Sciatic nerve (tissue), 2 donors: ENCODE measurements at regions of chr5 and their contacts with region 1.

Region 1: DNA sequence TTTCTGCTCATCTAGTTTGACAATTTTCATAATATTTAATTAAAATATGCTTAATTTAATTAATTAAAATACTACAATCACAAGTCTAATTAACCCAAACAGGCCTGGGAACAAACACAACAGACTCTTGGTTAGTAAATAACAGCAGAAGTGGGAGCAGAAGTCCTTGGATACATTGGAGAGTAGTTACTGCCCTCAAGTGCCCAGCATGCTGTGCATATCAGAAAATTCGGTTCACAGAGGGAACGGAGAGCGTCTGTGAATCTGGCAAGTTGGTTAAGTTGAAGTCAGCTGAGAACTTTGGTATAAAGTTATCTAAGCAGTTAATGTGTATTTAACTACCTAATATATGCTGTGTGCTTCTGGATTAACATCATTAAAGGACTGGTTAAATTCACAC is 87.0 kb upstream of the ATG10 start:
- DNase-seq: no peak
- ATAC-seq: peak; percentile 46

Region 2: GRCh38 chr5:79932510-79933504 is 1952.1 kb before region 1 on chr5:
- intact Hi-C with region 1: no loop called
- DNase-seq: peak; percentile 62
- ATAC-seq: peak; percentile 87

Region 3: DNA sequence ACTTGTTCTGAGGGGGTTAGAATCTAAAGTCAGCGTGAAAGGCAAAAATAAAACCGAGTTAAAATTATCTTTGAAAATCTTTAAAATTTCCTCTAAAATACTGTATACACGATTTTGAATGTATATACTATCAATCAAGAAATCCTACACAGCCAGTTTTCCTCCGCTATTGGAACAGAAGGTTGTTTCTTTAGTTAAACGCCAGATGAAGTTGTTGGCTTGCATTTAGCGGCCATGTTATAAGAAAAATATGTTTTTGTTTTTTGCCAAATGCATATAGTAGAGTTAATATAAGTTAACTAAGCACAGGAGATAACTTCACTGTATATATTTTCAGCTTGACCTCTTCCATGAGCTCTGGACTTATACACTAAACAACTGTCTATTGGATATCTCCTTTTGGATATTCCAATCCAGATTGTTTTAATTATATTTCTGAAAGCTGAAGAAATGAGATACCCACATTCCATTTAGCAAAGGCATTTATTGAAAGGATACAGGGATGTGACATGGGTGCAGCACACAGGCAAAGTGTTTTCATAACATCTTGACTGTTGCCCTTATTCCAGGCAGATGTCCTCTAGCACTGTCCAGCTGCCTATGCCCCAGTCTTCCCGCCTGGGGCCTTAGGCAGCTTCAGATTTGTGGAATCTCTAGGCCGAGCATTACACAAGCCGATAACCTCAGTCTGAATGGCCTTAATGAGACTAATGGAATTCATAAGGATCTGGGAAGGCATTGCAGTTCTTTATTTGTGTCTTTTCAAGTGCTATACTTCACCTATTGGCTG is 77.0 kb after region 1 on chr5:
- intact Hi-C with region 1: loop called (anchors 1 kb)
- DNase-seq: no peak
- ATAC-seq: no peak

Region 4: DNA sequence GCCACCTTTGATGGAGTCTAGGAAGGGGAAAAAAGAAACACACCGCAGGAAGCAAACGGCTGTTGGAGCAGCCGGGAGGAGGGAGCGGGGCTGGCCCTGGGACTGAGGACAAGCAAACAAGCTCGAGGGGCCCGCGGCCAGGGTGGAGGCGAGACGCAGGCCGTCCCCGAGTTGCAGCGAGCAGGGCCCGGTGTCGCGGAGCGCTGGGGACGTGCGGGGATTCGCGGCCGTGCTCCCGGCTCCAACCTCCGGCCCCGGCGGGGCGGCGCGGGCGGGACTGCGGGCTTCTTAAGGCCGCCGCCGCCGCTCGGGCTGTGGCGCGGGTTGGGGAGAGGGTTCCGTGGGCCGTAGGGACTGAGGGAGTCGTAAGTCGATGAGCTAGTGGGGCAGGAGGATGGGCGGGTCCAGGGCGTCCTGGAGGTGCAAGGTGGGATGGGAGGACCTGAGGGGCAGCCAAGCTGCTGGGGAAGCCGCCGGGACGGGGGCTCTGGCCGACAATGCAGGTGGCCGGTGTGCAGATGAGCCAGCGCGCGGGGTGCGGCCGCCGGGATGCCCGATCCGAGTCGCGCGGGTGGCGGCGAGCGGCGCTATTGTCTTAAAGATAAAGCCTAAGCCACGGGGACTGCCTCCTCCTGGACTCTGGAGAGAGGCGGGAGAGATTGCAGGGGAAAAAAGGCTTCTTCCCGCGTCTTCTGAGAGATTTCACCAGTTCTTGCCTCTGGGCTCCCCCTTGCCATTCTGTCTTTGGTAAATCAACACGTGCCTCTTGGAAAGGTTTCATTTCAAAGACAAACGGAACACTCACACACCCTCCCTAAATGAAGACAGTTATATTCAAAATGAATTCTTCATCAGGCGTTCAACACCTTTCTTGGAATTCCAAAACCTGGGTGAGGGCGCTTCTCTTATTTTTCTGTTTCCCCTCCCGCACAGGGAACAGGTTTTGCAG is 1837.4 kb after region 1 on chr5:
- intact Hi-C with region 1: no loop called
- DNase-seq: peak; percentile 82
- ATAC-seq: peak; percentile 86